ENCODE measurements at regions of chr19 and their contacts with region 1.

Region 1: DNA sequence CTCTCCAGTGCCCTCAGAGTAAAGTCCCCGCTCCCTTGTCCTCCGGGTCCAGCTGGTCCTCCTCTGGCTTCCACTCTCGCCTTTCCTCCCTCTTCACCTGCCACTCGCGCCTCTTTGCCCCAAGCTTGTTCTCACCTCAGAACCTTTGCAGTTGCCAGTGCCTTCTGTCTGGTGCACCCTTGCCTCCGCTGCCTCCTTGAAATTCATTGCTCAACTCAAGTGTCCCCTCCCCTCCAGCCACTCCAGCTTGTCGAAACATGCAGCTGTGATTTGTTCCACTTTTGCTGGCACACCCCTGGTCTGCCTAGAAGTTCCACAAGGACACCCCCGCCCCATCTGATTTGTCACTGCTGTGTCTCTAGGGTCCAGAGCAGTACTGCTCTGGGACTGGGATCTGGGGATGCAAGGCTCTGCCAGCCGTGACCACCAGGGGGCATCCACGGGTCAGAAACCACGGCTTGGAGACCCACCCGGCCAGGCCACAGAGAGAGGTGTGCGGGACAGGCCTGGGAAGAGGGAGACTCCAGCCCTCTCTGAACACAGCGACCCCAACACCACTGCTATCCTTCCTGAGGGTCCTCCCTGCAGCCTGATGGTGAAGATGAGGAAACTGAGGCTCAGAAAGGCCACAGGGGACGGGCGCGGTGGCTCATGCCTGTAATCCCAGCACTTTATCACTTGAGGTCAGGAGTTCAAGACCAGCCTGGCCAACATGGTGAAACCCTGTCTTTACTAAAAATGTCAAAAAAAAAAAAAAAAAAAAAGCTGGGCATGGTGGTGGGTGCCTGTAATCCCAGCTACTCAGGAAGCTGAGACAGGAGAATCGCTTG is 49.9 kb downstream of the AP1M1 start:
- DNase-seq: peak; percentile 4
- H3K4me3 ChIP-seq: no peak overlapping the region
- CTCF ChIP-seq: peak; percentile 96

Region 2: DNA sequence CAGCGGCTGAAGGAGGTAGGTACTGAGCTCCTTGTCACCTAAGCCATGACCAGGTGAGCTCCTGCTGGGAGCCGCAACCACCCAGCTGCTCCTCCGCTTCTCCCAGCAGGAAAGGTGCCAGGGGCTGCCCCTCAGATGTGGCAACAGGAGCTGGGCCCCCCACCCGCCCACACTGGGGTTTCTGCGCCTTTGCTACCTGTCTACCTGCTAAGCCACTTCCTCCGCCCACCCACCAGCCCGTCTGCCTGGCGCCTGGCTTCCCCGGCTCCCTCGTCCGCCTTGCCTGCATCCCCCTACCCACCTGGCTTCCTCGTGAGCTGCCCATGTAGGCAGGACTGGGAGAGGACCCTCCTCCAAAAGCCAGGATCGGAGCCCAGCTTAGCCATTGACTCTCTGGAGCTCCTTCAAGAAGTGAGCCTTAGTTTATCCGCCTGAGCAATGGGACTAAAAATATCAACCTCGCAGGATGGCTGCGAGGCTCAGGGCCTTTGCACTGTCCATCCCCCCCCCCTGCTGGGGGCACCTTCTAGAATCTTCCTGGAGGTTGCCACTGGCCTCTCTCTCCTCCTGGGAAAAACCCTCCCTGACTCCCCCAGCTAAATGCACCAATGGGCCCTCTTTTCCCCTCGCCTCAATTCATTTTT is 21.2 kb after region 1 on chr19:
- CTCF ChIA-PET with region 1: interaction called, 18 read pairs
- POLR2A ChIA-PET with region 1: no interaction called
- DNase-seq: no peak
- H3K4me3 ChIP-seq: no peak overlapping the region
- CTCF ChIP-seq: no peak

Region 3: GRCh38 chr19:16355293-16356043 is 107.9 kb after region 1 on chr19:
- CTCF ChIA-PET with region 1: interaction called, 10 read pairs
- POLR2A ChIA-PET with region 1: no interaction called
- DNase-seq: no peak
- H3K4me3 ChIP-seq: no peak overlapping the region
- CTCF ChIP-seq: no peak

Region 4: DNA sequence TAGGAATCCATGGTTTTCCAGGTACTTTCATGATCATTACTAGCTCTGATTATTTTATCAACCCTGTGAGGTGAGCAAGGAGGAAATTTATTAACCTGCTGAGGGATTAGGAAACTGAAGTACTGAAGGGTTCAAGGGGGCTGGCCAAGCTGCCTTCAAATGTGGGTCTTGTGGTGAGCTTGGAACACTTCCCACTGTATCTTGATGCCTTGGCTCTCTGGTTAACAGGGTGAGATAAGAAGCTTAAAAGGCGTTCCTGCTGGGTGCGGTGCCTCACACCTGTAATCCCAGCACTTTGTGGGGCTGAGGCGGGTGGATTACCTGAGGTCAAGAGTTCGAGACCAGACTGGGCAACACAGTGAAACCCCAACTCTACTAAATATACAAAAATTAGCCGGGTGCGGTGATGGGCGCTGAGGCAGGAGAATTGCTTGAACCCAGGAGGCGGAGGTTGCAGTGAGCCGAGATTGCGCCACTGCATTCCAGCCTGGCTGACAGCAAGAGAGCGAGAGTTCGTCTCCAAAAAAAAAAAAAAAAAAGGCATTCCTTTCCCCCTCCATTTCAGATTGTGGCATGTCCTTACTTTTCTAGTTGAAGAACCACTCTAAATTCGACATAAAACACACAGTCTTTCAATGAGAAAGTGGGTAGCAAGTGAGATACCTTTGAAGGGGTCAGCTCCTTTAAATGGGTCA is 147.3 kb after region 1 on chr19:
- CTCF ChIA-PET with region 1: interaction called, 17 read pairs
- POLR2A ChIA-PET with region 1: no interaction called
- DNase-seq: no peak
- H3K4me3 ChIP-seq: no peak overlapping the region
- CTCF ChIP-seq: no peak

Region 5: DNA sequence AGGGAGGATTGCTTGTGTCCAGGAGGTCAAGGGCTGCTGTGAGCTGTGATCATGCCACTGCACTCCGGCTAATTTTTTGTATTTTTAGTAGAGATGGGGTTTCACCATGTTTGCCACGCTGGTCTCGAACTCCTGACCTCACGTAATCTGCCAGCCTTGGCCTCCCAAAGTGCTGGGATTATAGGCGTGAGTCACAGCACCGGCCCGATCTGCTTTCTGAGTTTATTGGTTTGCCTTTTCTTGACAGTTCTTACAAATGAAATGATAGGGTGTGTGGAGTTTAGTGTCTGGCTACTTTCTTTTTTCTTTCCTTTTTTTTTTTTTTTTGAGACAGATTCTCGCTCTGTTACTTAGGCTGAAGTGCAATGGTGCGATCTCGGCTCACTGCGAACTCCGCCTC is 249.5 kb after region 1 on chr19:
- CTCF ChIA-PET with region 1: no interaction called
- POLR2A ChIA-PET with region 1: no interaction called
- DNase-seq: no peak
- H3K4me3 ChIP-seq: peak overlapping the region; percentile 94
- CTCF ChIP-seq: no peak